Activated CD4-positive, alpha-beta T cell treated with anti-CD3 and anti-CD28 coated beads, Interleukin-2, amount 10 ng/mL, durations not matched to agents 7 days and 5 days (primary cell): ENCODE measurements at regions of chr4 and their contacts with region 1.

Region 1: GRCh38 chr4:183396227-183396637 is 48.2 kb upstream of the CDKN2AIP start:
- DNase-seq: no peak
- H3K4me3 Mint-ChIP-seq: no peak overlapping the region
- H3K27ac Mint-ChIP-seq: no peak overlapping the region
- H3K4me1 Mint-ChIP-seq: peaks cover 37% of the 10 kb centered on the region
- H3K27me3 Mint-ChIP-seq: peaks cover 26% of the 10 kb centered on the region

Region 2: DNA sequence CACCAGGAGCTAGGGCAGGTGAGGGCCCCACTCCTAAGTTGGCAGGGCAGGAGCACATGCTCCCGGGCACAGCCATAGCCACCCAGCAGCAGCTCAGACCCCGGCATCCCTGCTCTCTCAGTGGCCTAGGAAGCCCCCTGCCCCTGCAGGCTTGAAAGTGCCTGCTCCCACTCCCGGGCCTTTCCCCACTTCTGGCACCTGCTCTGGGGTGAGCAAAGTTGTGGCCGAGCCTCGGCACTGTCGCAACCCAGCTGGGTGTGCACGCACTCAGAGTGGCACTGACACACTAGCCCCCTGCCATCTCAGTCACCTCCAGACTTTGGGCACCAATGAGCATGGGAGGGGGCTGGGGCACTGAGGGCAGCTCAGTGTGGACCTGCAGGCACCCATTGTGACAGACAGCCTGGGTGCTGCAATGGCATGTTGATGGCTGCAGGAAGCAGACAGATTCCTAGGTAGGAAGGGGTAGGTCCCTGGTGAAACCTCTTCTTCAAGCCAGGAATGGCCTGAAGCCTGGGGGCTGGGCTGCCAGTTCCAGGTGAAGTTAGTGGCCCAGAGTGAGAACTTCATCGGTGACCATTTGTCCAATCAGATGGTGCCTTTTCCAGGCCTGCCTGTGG is 12.5 kb before region 1 on chr4:
- CTCF ChIA-PET with region 1: no interaction called
- POLR2A ChIA-PET with region 1: no interaction called
- DNase-seq: no peak
- H3K4me3 Mint-ChIP-seq: no peak overlapping the region
- H3K27ac Mint-ChIP-seq: no peak overlapping the region
- H3K4me1 Mint-ChIP-seq: no peaks in the 10 kb centered on the region
- H3K27me3 Mint-ChIP-seq: peaks cover 2% of the 10 kb centered on the region

Region 3: DNA sequence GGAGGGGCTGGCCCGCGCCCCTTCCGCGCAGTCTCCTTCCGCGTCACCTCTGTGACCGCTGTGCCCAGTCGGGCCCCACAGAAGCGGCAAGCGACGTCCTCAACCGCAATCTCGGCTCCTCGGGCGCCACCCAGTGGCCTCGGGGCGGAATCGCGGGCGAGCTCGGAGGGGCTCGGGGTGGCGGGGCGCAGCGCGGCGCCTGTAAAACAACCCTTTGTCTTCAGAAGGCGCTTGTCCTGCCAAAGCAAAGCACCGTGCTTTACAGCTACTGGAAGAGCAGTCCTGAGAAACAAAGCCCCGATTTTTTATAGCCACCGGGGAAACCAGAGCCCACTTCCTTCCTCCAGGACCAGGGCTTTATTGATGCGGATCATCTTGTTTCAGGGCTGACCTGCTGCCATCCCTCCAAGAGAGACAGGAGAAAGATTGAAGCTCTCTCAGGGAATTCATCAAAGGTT is 10.9 kb after region 1 on chr4:
- CTCF ChIA-PET with region 1: interaction called, 11 read pairs
- POLR2A ChIA-PET with region 1: no interaction called
- DNase-seq: peak; percentile 88
- H3K4me3 Mint-ChIP-seq: peak overlapping the region; percentile 69
- H3K27ac Mint-ChIP-seq: peak overlapping the region; percentile 87
- H3K4me1 Mint-ChIP-seq: peaks cover 12% of the 10 kb centered on the region
- H3K27me3 Mint-ChIP-seq: no peaks in the 10 kb centered on the region